ENCODE measurements at regions of chr1 and their contacts with region 1.

Region 1: DNA sequence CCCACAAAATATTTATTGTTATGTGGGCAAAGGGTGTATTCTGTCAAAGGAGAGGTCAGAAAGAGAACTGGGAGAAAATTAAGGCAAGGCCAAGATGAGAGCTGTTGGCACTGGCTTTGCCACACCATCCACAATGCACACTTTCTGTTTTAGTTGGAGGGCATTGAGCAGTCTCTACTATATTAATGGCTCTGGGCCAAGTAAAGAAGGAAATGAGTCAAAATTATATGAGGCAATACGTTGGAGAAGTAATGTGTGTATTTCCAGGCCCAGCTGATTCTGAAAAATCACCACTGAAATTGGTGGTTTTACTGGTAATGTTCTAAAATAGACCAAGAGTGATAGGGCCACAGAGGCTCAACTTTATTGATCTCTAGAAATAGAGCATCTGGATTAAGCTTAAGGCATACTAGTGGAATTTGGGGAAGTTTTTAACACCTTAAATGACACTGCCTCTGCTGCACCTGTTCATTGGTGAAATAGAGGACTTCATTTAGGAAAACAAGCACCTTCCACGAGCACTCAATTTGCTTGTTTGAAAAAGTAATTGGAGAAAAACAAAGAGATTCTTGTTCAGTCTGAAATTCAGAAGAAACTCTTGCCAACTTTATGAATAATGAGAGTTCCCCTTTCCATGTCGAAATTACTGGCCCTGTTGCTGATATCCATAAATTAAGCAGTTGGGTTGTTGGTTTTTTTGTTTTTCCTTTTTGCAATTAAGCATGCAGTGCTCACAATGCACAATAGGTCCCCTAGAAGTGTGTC is 424.9 kb downstream of the ADGRL2 start:
- DNase-seq: peak; percentile 12
- ATAC-seq: peak; percentile 87
- H3K4me3 ChIP-seq: no peak overlapping the region
- H3K27ac ChIP-seq: no peak overlapping the region
- H3K4me1 ChIP-seq: no peaks in the 10 kb centered on the region
- H3K27me3 ChIP-seq: no peaks in the 10 kb centered on the region
- CTCF ChIP-seq: no peak
- EP300 ChIP-seq: no peak; a peak in 1 of 4 replicates
- POLR2A ChIP-seq: no peak
- RAD21 ChIP-seq: no peak

Region 2: GRCh38 chr1:82032068-82032467 is 193.5 kb before region 1 on chr1:
- CTCF ChIA-PET with region 1: no interaction called
- POLR2A ChIA-PET with region 1: no interaction called
- RAD21 ChIA-PET with region 1: no interaction called
- SMC1A ChIA-PET with region 1: no interaction called
- in situ Hi-C with region 1: no loop called
- intact Hi-C with region 1: no loop called
- DNase-seq: no peak
- ATAC-seq: no peak
- H3K4me3 ChIP-seq: no peak overlapping the region
- H3K27ac ChIP-seq: no peak overlapping the region
- H3K4me1 ChIP-seq: no peaks in the 10 kb centered on the region
- H3K27me3 ChIP-seq: no peaks in the 10 kb centered on the region
- CTCF ChIP-seq: no peak
- EP300 ChIP-seq: no peak
- POLR2A ChIP-seq: no peak
- RAD21 ChIP-seq: no peak

Region 3: GRCh38 chr1:82161700-82162141 is 63.9 kb before region 1 on chr1:
- CTCF ChIA-PET with region 1: no interaction called
- POLR2A ChIA-PET with region 1: interaction called, 4 read pairs
- RAD21 ChIA-PET with region 1: interaction called, 6 read pairs
- SMC1A ChIA-PET with region 1: interaction called, 41 read pairs
- in situ Hi-C with region 1: no loop called
- intact Hi-C with region 1: no loop called
- DNase-seq: no peak
- ATAC-seq: peak; percentile 91
- H3K4me3 ChIP-seq: no peak overlapping the region
- H3K27ac ChIP-seq: no peak overlapping the region
- H3K4me1 ChIP-seq: no peaks in the 10 kb centered on the region
- H3K27me3 ChIP-seq: no peaks in the 10 kb centered on the region
- CTCF ChIP-seq: no peak
- EP300 ChIP-seq: peak in 1 of 2 experiments; percentile 25; a peak in 1 of 4 replicates
- POLR2A ChIP-seq: no peak
- RAD21 ChIP-seq: no peak

Region 4: DNA sequence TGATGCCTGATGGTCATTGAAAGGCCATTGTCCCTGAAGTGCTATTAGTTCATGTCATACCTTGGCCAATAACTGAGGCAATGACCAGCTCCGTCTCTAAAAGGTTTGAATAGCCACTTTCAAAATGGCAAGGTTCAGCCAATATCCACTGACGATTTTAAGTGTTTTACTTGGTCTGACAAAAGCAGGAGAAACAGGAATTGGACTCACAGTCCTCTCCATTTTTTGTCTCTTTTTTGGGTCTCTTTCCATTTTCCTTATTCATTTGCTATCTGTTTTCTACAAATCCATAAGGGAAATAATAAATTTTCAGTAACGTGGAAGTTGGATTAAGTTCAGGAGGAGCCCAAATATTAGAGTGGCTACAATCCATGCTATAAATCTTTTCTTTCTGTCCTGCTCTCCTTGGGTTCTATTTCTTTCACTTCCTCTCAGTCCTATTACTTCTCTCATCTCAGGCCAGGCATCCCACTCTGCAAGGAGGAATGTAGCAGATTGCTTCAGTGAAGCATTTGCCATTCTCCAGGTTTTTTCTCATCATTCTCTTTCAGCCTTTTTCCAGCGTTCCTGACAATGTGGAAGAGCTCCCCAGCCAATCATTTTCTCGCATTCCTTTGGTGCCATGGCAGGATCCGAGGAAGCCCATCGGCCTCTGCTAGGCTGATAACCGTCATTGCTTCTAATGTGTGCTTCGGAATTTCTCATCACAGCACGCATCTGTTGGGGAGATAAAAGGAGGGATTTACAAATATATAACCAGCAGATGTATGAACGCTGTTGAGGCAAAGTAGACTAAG is 10.3 kb before region 1 on chr1:
- CTCF ChIA-PET with region 1: interaction called, 5 read pairs
- POLR2A ChIA-PET with region 1: interaction called, 7 read pairs
- RAD21 ChIA-PET with region 1: interaction called, 5 read pairs
- SMC1A ChIA-PET with region 1: interaction called, 20 read pairs
- in situ Hi-C with region 1: no loop called
- intact Hi-C with region 1: no loop called
- DNase-seq: no peak
- ATAC-seq: no peak
- H3K4me3 ChIP-seq: no peak overlapping the region
- H3K27ac ChIP-seq: no peak overlapping the region
- H3K4me1 ChIP-seq: no peaks in the 10 kb centered on the region
- H3K27me3 ChIP-seq: no peaks in the 10 kb centered on the region
- CTCF ChIP-seq: no peak
- EP300 ChIP-seq: no peak
- POLR2A ChIP-seq: no peak
- RAD21 ChIP-seq: no peak

Region 5: GRCh38 chr1:82245345-82246014 is 19.9 kb after region 1 on chr1:
- CTCF ChIA-PET with region 1: interaction called, 12 read pairs
- POLR2A ChIA-PET with region 1: interaction called, 3 read pairs
- RAD21 ChIA-PET with region 1: interaction called, 12 read pairs
- SMC1A ChIA-PET with region 1: interaction called, 16 read pairs
- in situ Hi-C with region 1: no loop called
- intact Hi-C with region 1: no loop called
- DNase-seq: no peak
- ATAC-seq: peak; percentile 91
- H3K4me3 ChIP-seq: no peak overlapping the region
- H3K27ac ChIP-seq: no peak overlapping the region
- H3K4me1 ChIP-seq: no peaks in the 10 kb centered on the region
- H3K27me3 ChIP-seq: no peaks in the 10 kb centered on the region
- CTCF ChIP-seq: no peak
- EP300 ChIP-seq: no peak
- POLR2A ChIP-seq: no peak
- RAD21 ChIP-seq: no peak

Region 6: DNA sequence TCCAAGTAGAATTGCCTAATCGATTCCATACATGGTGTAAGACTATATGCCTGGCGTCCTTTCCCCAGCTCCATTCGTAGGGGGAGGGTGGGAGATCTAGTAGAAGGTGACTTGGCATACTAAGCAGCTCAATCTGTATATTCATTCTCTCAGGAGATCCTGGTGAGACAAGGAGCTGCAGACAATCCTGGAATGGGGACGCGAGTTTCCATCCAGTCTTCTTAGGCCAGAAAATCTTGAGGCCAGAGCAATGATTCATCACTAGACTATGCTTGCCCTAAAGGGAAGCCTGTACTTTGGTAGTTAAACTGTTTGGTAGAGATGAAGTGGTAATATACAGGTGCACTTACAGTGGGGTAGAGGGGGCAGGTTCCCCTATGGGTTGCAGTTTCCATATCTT is 43.8 kb after region 1 on chr1:
- CTCF ChIA-PET with region 1: no interaction called
- POLR2A ChIA-PET with region 1: no interaction called
- RAD21 ChIA-PET with region 1: interaction called, 3 read pairs
- SMC1A ChIA-PET with region 1: interaction called, 24 read pairs
- in situ Hi-C with region 1: no loop called
- intact Hi-C with region 1: no loop called
- DNase-seq: no peak
- ATAC-seq: no peak
- H3K4me3 ChIP-seq: no peak overlapping the region
- H3K27ac ChIP-seq: no peak overlapping the region
- H3K4me1 ChIP-seq: no peaks in the 10 kb centered on the region
- H3K27me3 ChIP-seq: no peaks in the 10 kb centered on the region
- CTCF ChIP-seq: no peak
- EP300 ChIP-seq: no peak
- POLR2A ChIP-seq: no peak
- RAD21 ChIP-seq: no peak

Region 7: DNA sequence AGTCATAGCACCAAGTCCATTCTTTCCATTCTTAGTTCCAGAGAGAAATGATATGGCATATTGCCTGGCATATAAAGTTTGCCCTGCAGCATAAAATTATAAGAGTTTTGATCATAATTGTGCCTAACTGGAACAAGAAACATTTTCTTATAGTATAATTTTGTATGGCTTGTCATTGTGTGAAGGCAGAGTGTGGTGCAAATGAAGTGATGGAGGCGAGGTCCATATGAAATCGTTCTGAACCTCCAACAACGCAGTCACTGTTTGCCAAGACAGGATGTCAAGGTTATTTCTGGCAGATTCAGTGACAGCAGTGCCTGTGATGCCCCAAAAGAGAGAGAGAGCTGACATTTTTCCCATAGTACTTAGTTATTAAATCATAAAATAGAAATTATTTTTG is 159.2 kb after region 1 on chr1:
- CTCF ChIA-PET with region 1: no interaction called
- POLR2A ChIA-PET with region 1: no interaction called
- RAD21 ChIA-PET with region 1: no interaction called
- SMC1A ChIA-PET with region 1: no interaction called
- in situ Hi-C with region 1: no loop called
- intact Hi-C with region 1: no loop called
- DNase-seq: no peak
- ATAC-seq: no peak
- H3K4me3 ChIP-seq: no peak overlapping the region
- H3K27ac ChIP-seq: no peak overlapping the region
- H3K4me1 ChIP-seq: no peaks in the 10 kb centered on the region
- H3K27me3 ChIP-seq: no peaks in the 10 kb centered on the region
- CTCF ChIP-seq: no peak
- EP300 ChIP-seq: no peak
- POLR2A ChIP-seq: no peak
- RAD21 ChIP-seq: no peak

Measured in GM12878 (cell line).